ENCODE measurements at regions of chrX and their contacts with region 1.

Region 1: DNA sequence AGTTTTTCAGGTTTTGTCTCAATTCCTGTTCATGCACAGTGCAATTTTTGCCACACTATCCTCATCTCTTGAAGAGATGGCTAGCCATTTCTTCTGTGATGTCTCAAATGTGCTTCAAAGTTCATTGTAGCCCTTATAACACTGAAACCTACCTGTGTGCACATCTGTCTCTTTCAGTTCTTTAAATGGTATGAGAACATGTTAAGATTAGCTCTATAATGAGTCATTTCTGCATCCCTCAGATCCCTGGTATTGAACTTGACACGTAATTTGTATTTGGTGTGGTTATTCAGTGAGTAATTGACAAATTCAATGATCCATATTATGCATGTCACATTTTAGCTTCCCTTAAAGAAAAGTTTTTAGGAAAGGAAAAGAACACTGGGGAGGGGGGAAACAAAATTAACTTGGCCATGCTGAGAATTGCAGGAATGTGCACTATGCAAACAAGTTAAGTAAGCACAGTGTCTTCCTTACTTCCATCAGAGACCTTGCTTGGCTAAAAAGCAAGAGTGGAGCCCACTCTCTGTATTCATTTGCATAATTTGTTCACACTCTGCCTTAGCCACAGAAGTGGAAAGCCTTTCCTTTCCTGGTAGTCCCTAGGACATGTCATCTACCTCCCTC is 659.8 kb upstream of the MAGEB2 start:
- DNase-seq: no peak
- ATAC-seq: peak; percentile 27; the same call in 1 of the 2 replicates
- H3K4me3 ChIP-seq: no peak overlapping the region
- H3K27ac ChIP-seq: no peak overlapping the region
- H3K4me1 ChIP-seq: no peaks in the 10 kb centered on the region
- H3K27me3 ChIP-seq: no peaks in the 10 kb centered on the region; the same call in 1 of the 2 replicates
- CTCF ChIP-seq: no peak
- POLR2A ChIP-seq: no peak
- RAD21 ChIP-seq: no peak

Region 2: GRCh38 chrX:28311466-28311865 is 1244.1 kb before region 1 on chrX:
- CTCF ChIA-PET with region 1: no interaction called
- POLR2A ChIA-PET with region 1: no interaction called
- dilution Hi-C with region 1: no loop called
- in situ Hi-C with region 1: no loop called
- intact Hi-C with region 1: loop called (anchors 10 kb)
- DNase-seq: no peak
- ATAC-seq: no peak
- H3K4me3 ChIP-seq: no peak overlapping the region
- H3K27ac ChIP-seq: no peak overlapping the region
- H3K4me1 ChIP-seq: no peaks in the 10 kb centered on the region
- H3K27me3 ChIP-seq: no peaks in the 10 kb centered on the region
- CTCF ChIP-seq: no peak
- POLR2A ChIP-seq: no peak
- RAD21 ChIP-seq: no peak

Measured in IMR-90 (cell line).